ENCODE measurements at regions of chr19 and their contacts with region 1.

Region 1: GRCh38 chr19:6424939-6425731 is 524 bp upstream of the KHSRP start:
- DNase-seq: peak; percentile 100
- H3K4me3 Mint-ChIP-seq: peak overlapping the region; percentile 75
- H3K27ac Mint-ChIP-seq: peak overlapping the region; percentile 92
- H3K4me1 Mint-ChIP-seq: peaks cover 36% of the 10 kb centered on the region
- H3K27me3 Mint-ChIP-seq: no peaks in the 10 kb centered on the region

Region 2: DNA sequence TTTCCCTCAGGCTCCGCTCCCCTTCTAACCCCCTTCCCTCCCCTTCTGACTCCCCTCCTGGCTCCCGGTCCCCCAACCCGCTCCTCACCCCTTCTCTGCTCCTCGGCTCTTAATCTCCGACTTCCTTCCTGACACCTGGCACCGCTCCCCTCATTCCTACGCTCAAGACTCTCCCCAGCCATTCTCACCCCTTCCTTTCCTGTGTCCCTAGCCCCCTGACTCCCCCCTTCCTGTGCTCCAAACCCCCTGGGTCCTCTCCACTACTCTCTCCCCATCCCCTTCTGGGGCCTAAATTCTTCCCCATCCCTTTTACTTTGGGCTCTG is 63.1 kb before region 1 on chr19:
- CTCF ChIA-PET with region 1: interaction called, 5 read pairs
- POLR2A ChIA-PET with region 1: interaction called, 8 read pairs
- intact Hi-C with region 1: loop called (anchors 1 kb)
- DNase-seq: no peak
- H3K4me3 Mint-ChIP-seq: peak overlapping the region; percentile 98
- H3K27ac Mint-ChIP-seq: peak overlapping the region; percentile 95
- H3K4me1 Mint-ChIP-seq: peaks cover 18% of the 10 kb centered on the region
- H3K27me3 Mint-ChIP-seq: no peaks in the 10 kb centered on the region

Region 3: GRCh38 chr19:6393074-6393983 is 31.8 kb before region 1 on chr19 and contains the start of gene GTF2F1:
- CTCF ChIA-PET with region 1: interaction called, 3 read pairs
- POLR2A ChIA-PET with region 1: interaction called, 5 read pairs
- intact Hi-C with region 1: loop called (anchors 1 kb)
- DNase-seq: peak; percentile 94
- H3K4me3 Mint-ChIP-seq: peak within 1 kb of the TSS; percentile 94
- H3K27ac Mint-ChIP-seq: peak within 1 kb of the TSS; percentile 93
- H3K4me1 Mint-ChIP-seq: peaks cover 24% of the 10 kb centered on the region
- H3K27me3 Mint-ChIP-seq: no peaks in the 10 kb centered on the region
- total RNA-seq, gene GTF2F1: 67.0 to 70.9 TPM

Region 4: GRCh38 chr19:6481541-6482342 is 56.6 kb after region 1 on chr19 and contains the start of gene DENND1C:
- CTCF ChIA-PET with region 1: no interaction called
- POLR2A ChIA-PET with region 1: interaction called, 5 read pairs
- intact Hi-C with region 1: loop called (anchors 2 kb)
- DNase-seq: peak; percentile 85
- H3K4me3 Mint-ChIP-seq: peak within 1 kb of the TSS; percentile 100
- H3K27ac Mint-ChIP-seq: peak within 1 kb of the TSS; percentile 98
- H3K4me1 Mint-ChIP-seq: peaks cover 30% of the 10 kb centered on the region
- H3K27me3 Mint-ChIP-seq: no peaks in the 10 kb centered on the region
- total RNA-seq, gene DENND1C: 62.1 to 69.3 TPM